ENCODE measurements at regions of chr11 and their contacts with region 1.

Region 1: DNA sequence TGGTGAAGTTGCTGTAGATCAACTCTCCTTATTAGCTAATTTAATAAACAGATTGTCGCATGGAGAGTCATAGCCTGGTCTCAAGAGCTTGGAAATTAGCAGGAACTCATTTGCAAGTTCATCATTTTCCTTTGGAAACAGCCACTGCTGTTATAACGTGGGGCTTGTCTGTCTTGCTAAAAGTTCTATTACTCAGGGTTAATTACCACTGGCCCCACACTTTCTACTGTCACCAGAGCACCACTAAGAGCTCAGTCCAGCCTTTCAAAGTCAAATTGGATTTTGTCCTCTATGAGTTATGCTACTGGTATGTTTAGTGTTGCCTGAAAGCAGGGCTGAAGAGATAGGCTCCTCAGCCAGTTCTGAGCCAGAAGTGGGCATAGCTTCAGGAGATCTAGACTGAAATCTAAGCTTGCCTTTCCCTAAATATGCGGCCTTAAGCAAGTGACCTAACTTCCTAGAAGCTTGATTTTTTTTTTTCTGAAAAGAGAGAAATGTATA is 292.2 kb downstream of the INSC start:
- DNase-seq: no peak

Region 2: DNA sequence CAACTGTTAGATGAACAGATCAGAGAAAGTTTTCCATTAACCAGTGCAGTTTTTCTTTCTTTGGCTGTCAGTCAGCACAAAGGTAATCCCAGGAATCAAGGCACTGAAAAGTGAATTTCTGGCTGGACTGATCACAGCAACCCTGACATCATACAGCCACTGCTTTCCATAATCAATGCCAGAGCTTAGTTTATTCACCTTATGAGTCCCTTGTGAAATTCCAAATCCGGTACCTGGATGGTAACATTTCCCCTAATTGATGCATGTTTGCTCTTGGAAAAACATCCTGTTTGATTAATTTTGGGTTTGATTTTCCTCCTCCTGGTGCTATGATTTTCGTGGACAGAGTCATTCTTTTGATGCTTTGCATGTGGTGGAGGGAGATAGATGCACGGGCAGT is 27.6 kb after region 1 on chr11:
- intact Hi-C with region 1: loop called in 1 of 2 experiments (anchors 2 kb)
- DNase-seq: no peak

Measured in posterior vena cava (tissue), 2 donors.